ENCODE measurements at regions of chr14 and their contacts with region 1.

Region 1: GRCh38 chr14:52824507-52824906 is 33.1 kb upstream of the GNPNAT1 start:
- DNase-seq: no peak
- ATAC-seq: no peak
- H3K4me3 ChIP-seq: no peak overlapping the region
- H3K4me3 Mint-ChIP-seq: no peak overlapping the region
- H3K27ac ChIP-seq: no peak overlapping the region
- H3K27ac Mint-ChIP-seq: no peak overlapping the region
- H3K4me1 ChIP-seq: no peaks in the 10 kb centered on the region
- H3K4me1 Mint-ChIP-seq: no peaks in the 10 kb centered on the region
- H3K27me3 ChIP-seq: no peaks in the 10 kb centered on the region
- H3K27me3 Mint-ChIP-seq: peaks cover 5% of the 10 kb centered on the region
- CTCF ChIP-seq: no peak

Region 2: DNA sequence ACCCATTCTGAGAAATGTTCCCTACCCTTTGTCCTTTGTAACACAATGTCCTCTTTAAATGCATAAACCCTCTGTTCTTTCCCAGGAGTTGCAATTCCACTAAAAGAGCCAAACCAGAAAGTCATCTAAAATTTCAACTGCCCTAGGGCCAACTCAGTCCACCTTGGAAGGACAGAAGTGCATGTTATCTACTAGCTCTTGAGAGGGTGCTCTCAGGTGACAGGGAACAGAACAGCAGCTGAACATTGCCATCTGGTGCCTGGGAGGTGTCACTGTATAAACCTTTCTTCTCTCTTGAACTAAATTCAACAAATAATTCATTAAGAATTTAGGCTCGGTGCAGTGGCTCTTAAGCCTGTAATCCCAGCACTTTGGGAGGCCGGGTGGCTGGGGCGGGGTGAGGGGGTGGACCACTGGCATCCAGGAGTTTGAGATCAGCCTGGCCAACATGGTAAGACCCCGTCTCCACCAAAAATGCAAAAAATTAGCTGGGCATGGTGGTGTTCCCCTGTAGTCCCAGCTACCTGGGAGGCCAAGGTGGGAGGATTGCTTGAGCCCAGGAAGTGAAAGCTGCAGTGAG is 136.6 kb after region 1 on chr14:
- CTCF ChIA-PET with region 1: interaction called, 18 read pairs
- POLR2A ChIA-PET with region 1: interaction called, 3 read pairs
- intact Hi-C with region 1: loop called (anchors 1 kb)
- DNase-seq: peak; percentile 32 to 82 (median 49)
- ATAC-seq: peak; percentile 91
- H3K4me3 ChIP-seq: no peak overlapping the region
- H3K4me3 Mint-ChIP-seq: no peak overlapping the region
- H3K27ac ChIP-seq: peak overlapping the region in 1 of 2 donors; percentile 17
- H3K27ac Mint-ChIP-seq: peak overlapping the region; percentile 11
- H3K4me1 ChIP-seq: peaks cover 9% of the 10 kb centered on the region
- H3K4me1 Mint-ChIP-seq: peaks cover 9% of the 10 kb centered on the region
- H3K27me3 ChIP-seq: no peaks in the 10 kb centered on the region
- H3K27me3 Mint-ChIP-seq: no peaks in the 10 kb centered on the region
- CTCF ChIP-seq: peak; percentile 62

Region 3: GRCh38 chr14:53055003-53055402 is 230.5 kb after region 1 on chr14:
- CTCF ChIA-PET with region 1: no interaction called
- POLR2A ChIA-PET with region 1: no interaction called
- intact Hi-C with region 1: loop called (anchors 1 to 2 kb)
- DNase-seq: peak in 3 of 14 experiments; percentile 47 to 62 (median 61)
- ATAC-seq: peak; percentile 51
- H3K4me3 ChIP-seq: no peak overlapping the region
- H3K4me3 Mint-ChIP-seq: no peak overlapping the region
- H3K27ac ChIP-seq: no peak overlapping the region
- H3K27ac Mint-ChIP-seq: no peak overlapping the region
- H3K4me1 ChIP-seq: no peaks in the 10 kb centered on the region
- H3K4me1 Mint-ChIP-seq: peaks cover 4% of the 10 kb centered on the region
- H3K27me3 ChIP-seq: no peaks in the 10 kb centered on the region
- H3K27me3 Mint-ChIP-seq: no peaks in the 10 kb centered on the region
- CTCF ChIP-seq: peak; percentile 90

Region 4: GRCh38 chr14:53306267-53306721 is 481.8 kb after region 1 on chr14:
- CTCF ChIA-PET with region 1: no interaction called
- POLR2A ChIA-PET with region 1: no interaction called
- intact Hi-C with region 1: loop called (anchors 2 kb)
- DNase-seq: peak in 13 of 14 experiments; percentile 1 to 63 (median 16)
- ATAC-seq: peak; percentile 41
- H3K4me3 ChIP-seq: peak overlapping the region; percentile 30
- H3K4me3 Mint-ChIP-seq: peak overlapping the region; percentile 0
- H3K27ac ChIP-seq: no peak overlapping the region
- H3K27ac Mint-ChIP-seq: no peak overlapping the region
- H3K4me1 ChIP-seq: peaks cover 3% of the 10 kb centered on the region
- H3K4me1 Mint-ChIP-seq: no peaks in the 10 kb centered on the region
- H3K27me3 ChIP-seq: peaks cover 0 to 7% of the 10 kb centered on the region in 2 experiments
- H3K27me3 Mint-ChIP-seq: peaks cover 5% of the 10 kb centered on the region
- CTCF ChIP-seq: peak; percentile 68

Region 5: DNA sequence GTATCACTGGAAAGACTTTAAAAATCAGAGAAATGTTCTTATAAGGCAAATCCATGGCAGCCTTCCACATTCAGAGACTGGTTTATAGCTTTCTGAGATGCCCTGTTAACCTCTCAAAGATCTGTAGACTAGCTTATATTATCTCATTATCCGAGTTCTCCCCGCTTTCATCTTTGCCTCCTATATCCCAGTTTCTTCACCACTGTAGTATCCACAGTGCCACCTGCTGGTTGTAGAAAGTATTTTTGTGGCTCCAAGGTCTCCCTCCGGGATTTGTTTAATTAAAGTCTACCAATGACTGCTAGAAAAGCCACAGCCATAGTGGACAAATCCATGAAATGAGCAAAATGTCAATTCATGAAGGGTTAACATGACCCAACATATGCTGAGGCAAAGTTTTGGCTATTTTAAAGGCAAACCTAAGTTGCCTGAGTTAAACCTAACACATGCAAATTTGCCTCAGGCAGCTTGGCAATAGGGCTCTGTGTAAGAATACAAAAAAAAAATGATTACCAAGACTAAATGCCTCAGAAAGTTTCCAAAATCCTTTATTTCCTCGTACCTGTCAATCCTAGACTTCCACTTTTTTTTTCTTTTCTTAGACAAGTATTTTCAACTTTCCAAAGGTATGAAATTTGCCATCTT is 1350.9 kb after region 1 on chr14:
- CTCF ChIA-PET with region 1: no interaction called
- POLR2A ChIA-PET with region 1: no interaction called
- intact Hi-C with region 1: loop called (anchors 5 kb)
- DNase-seq: peak in 9 of 14 experiments; percentile 3 to 55 (median 15)
- ATAC-seq: no peak
- H3K4me3 ChIP-seq: no peak overlapping the region
- H3K4me3 Mint-ChIP-seq: no peak overlapping the region
- H3K27ac ChIP-seq: no peak overlapping the region
- H3K27ac Mint-ChIP-seq: no peak overlapping the region
- H3K4me1 ChIP-seq: no peaks in the 10 kb centered on the region
- H3K4me1 Mint-ChIP-seq: peaks cover 4% of the 10 kb centered on the region
- H3K27me3 ChIP-seq: peaks cover 2 to 15% of the 10 kb centered on the region in 2 experiments
- H3K27me3 Mint-ChIP-seq: peaks cover 58% of the 10 kb centered on the region
- CTCF ChIP-seq: peak; percentile 75

Measured in CD4-positive, alpha-beta T cell (primary cell).